Caco-2 (cell line): ENCODE measurements at regions of chr6 and their contacts with region 1.

Region 1: GRCh38 chr6:144284783-144285547 is at the start of gene UTRN:
- DNase-seq: peak; percentile 87
- H3K4me3 ChIP-seq: peak within 1 kb of the TSS; percentile 71
- H3K4me3 Mint-ChIP-seq: peak within 1 kb of the TSS; percentile 81
- H3K27ac Mint-ChIP-seq: peak within 1 kb of the TSS; percentile 95
- H3K4me1 ChIP-seq: peaks cover 7% of the 10 kb centered on the region; the same call in 1 of the 2 replicates
- H3K4me1 Mint-ChIP-seq: peaks cover 20% of the 10 kb centered on the region
- H3K27me3 ChIP-seq: no peaks in the 10 kb centered on the region
- H3K27me3 Mint-ChIP-seq: no peaks in the 10 kb centered on the region
- CTCF ChIP-seq: no peak
- total RNA-seq, gene UTRN: 216 and 233 TPM in 2 replicates

Region 2: GRCh38 chr6:144149891-144150709 is 134.9 kb before region 1 on chr6 and contains the start of gene STX11:
- CTCF ChIA-PET with region 1: no interaction called
- POLR2A ChIA-PET with region 1: no interaction called
- intact Hi-C with region 1: loop called (anchors 5 kb)
- DNase-seq: peak; percentile 60 to 80
- H3K4me3 ChIP-seq: peak within 1 kb of the TSS; percentile 78
- H3K4me3 Mint-ChIP-seq: peak within 1 kb of the TSS; percentile 83
- H3K27ac Mint-ChIP-seq: no peak within 1 kb of the TSS
- H3K4me1 ChIP-seq: peaks cover 8% of the 10 kb centered on the region
- H3K4me1 Mint-ChIP-seq: peaks cover 7% of the 10 kb centered on the region
- H3K27me3 ChIP-seq: no peaks in the 10 kb centered on the region
- H3K27me3 Mint-ChIP-seq: peaks cover 2% of the 10 kb centered on the region
- CTCF ChIP-seq: peak in 1 of 2 experiments; percentile 15
- total RNA-seq, gene STX11: 1.3 TPM in 2 replicates

Region 3: DNA sequence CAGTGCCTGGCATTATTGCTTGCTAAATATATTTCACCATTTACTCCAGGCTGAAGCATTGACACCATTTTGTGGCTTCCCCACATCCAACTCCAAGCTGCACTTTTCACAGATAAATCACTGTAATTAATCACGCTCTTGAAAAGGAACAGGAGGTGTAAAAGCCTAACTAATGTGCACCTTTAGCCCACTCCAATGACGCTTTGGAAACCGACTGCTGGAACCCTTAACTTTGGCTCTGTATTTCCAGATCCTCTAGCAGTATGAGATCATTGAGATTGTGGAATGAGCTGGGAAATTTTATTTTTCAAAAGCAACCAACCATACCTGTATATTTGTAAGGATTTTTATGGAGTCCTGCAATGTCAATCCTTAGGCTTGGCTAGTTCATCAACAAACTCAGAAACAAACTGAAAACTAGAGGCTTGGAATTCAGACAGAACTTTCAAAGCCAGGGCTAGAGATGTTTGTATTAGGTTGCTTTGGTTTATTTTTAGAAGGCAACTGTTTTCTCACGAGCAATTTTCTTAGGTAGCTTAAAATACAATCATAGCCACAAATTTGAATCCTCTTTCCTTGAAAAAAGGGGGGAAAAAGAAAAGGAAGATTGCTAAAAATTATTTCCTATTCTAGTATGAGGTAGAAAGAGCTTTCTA is 52.7 kb before region 1 on chr6:
- CTCF ChIA-PET with region 1: no interaction called
- POLR2A ChIA-PET with region 1: interaction called, 13 read pairs
- intact Hi-C with region 1: no loop called
- DNase-seq: no peak
- H3K4me3 ChIP-seq: no peak overlapping the region
- H3K4me3 Mint-ChIP-seq: no peak overlapping the region
- H3K27ac Mint-ChIP-seq: no peak overlapping the region
- H3K4me1 ChIP-seq: no peaks in the 10 kb centered on the region; the same call in none of the 2 replicates
- H3K4me1 Mint-ChIP-seq: peaks cover 7% of the 10 kb centered on the region
- H3K27me3 ChIP-seq: no peaks in the 10 kb centered on the region
- H3K27me3 Mint-ChIP-seq: no peaks in the 10 kb centered on the region
- CTCF ChIP-seq: no peak

Region 4: DNA sequence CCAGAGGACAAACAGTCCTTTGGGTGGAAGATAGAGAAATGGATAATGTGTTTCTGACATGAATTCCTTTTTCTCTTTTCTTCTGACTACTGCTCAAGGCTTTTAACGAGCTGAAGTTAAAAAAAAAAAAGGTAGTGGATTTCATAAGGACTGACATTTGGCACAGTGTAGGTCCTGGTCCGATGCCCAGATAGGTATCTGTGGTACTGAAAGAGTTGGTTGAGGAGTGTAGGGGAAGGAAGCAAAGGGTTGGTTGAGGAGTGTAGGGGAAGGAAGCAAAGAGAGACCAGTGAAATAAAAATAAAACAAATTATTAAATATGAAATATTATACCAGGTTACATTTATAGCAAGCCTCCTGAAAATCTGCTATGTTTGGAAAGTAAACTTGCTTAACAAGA is 12.0 kb after region 1 on chr6:
- CTCF ChIA-PET with region 1: interaction called, 5 read pairs
- POLR2A ChIA-PET with region 1: interaction called, 3 read pairs
- intact Hi-C with region 1: loop called (anchors 1 kb)
- DNase-seq: no peak
- H3K4me3 ChIP-seq: no peak overlapping the region
- H3K4me3 Mint-ChIP-seq: peak overlapping the region; percentile 54
- H3K27ac Mint-ChIP-seq: peak overlapping the region; percentile 91
- H3K4me1 ChIP-seq: peaks cover 59% of the 10 kb centered on the region
- H3K4me1 Mint-ChIP-seq: peaks cover 32% of the 10 kb centered on the region
- H3K27me3 ChIP-seq: no peaks in the 10 kb centered on the region
- H3K27me3 Mint-ChIP-seq: no peaks in the 10 kb centered on the region
- CTCF ChIP-seq: no peak

Region 5: GRCh38 chr6:144334131-144334708 is 49.3 kb after region 1 on chr6:
- CTCF ChIA-PET with region 1: no interaction called
- POLR2A ChIA-PET with region 1: interaction called, 11 read pairs
- intact Hi-C with region 1: loop called (anchors 1 kb)
- DNase-seq: no peak
- H3K4me3 ChIP-seq: no peak overlapping the region
- H3K4me3 Mint-ChIP-seq: no peak overlapping the region
- H3K27ac Mint-ChIP-seq: no peak overlapping the region
- H3K4me1 ChIP-seq: peaks cover 52% of the 10 kb centered on the region
- H3K4me1 Mint-ChIP-seq: peaks cover 60% of the 10 kb centered on the region
- H3K27me3 ChIP-seq: no peaks in the 10 kb centered on the region
- H3K27me3 Mint-ChIP-seq: no peaks in the 10 kb centered on the region
- CTCF ChIP-seq: no peak

Region 6: GRCh38 chr6:144482142-144482541 is 197.2 kb after region 1 on chr6:
- CTCF ChIA-PET with region 1: interaction called, 3 read pairs
- POLR2A ChIA-PET with region 1: no interaction called
- intact Hi-C with region 1: loop called (anchors 10 kb)
- DNase-seq: peak; percentile 66 to 73
- H3K4me3 ChIP-seq: no peak overlapping the region
- H3K4me3 Mint-ChIP-seq: no peak overlapping the region
- H3K27ac Mint-ChIP-seq: no peak overlapping the region
- H3K4me1 ChIP-seq: no peaks in the 10 kb centered on the region
- H3K4me1 Mint-ChIP-seq: no peaks in the 10 kb centered on the region
- H3K27me3 ChIP-seq: no peaks in the 10 kb centered on the region
- H3K27me3 Mint-ChIP-seq: no peaks in the 10 kb centered on the region
- CTCF ChIP-seq: peak; percentile 58 to 77

Region 7: DNA sequence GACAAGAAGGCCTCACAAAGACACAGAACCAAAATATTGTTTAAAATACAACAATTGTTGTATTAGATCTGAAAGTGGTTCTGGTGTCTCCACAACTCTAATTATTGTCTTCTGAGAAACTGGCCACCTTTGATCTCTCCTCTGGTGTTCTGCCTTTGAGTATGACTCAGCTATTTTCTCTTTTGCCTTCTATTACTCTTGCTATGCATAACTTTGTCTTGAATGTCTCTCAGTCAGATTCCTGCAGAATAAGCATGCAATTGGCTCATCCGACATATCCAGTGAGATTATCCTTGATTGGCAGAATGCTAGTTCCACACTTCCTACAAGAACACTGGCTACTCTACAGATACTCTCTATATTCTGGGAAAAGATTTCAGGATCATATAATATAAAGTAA is 1464.7 kb after region 1 on chr6:
- CTCF ChIA-PET with region 1: no interaction called
- POLR2A ChIA-PET with region 1: no interaction called
- intact Hi-C with region 1: no loop called
- DNase-seq: no peak
- H3K4me3 ChIP-seq: no peak overlapping the region
- H3K4me3 Mint-ChIP-seq: no peak overlapping the region
- H3K27ac Mint-ChIP-seq: no peak overlapping the region
- H3K4me1 ChIP-seq: peaks cover 7% of the 10 kb centered on the region
- H3K4me1 Mint-ChIP-seq: peaks cover 7% of the 10 kb centered on the region
- H3K27me3 ChIP-seq: no peaks in the 10 kb centered on the region
- H3K27me3 Mint-ChIP-seq: no peaks in the 10 kb centered on the region
- CTCF ChIP-seq: no peak